ENCODE measurements at regions of chr11 and their contacts with region 1.

Region 1: GRCh38 chr11:124837491-124837856 is 27.8 kb upstream of the ROBO3 start:
- DNase-seq: peak; percentile 20
- H3K4me3 Mint-ChIP-seq: no peak overlapping the region
- H3K27ac Mint-ChIP-seq: no peak overlapping the region
- H3K4me1 Mint-ChIP-seq: peaks cover 20% of the 10 kb centered on the region
- H3K27me3 Mint-ChIP-seq: peaks cover 54% of the 10 kb centered on the region

Region 2: DNA sequence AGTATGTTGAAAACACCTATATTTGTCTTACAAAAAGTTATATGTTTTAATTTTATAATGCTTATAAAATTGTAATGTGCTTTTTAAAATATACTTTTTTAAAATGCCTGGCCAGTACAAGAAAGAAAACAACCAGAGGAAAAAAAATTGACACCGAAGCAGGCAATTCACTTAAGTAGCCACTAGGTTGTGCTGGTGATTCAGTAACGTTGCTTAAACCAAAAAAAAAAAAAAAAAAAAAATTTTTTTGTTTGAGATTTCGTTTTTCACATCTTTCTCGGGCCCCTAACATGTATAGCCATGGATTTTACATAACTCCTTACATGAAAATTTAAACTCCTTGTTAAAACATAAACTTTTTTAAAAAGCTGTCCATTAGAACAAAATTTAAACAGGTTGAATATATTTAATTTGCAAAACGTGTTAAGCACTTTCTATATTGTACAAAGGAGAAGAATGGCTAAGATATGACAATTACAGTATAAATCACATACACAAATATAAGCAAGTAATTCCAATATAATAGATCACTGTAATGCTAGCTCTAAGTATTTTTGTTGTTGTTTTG is 422.0 kb before region 1 on chr11:
- CTCF ChIA-PET with region 1: interaction called, 3 read pairs
- intact Hi-C with region 1: loop called (anchors 2 kb)
- DNase-seq: no peak
- H3K4me3 Mint-ChIP-seq: no peak overlapping the region
- H3K27ac Mint-ChIP-seq: no peak overlapping the region
- H3K4me1 Mint-ChIP-seq: no peaks in the 10 kb centered on the region
- H3K27me3 Mint-ChIP-seq: peaks cover 15% of the 10 kb centered on the region

Region 3: GRCh38 chr11:124693142-124693541 is 144.3 kb before region 1 on chr11:
- CTCF ChIA-PET with region 1: no interaction called
- intact Hi-C with region 1: no loop called
- DNase-seq: no peak
- H3K4me3 Mint-ChIP-seq: no peak overlapping the region
- H3K27ac Mint-ChIP-seq: no peak overlapping the region
- H3K4me1 Mint-ChIP-seq: no peaks in the 10 kb centered on the region
- H3K27me3 Mint-ChIP-seq: no peaks in the 10 kb centered on the region

Region 4: GRCh38 chr11:124746621-124747243 is 90.7 kb before region 1 on chr11:
- CTCF ChIA-PET with region 1: interaction called, 8 read pairs
- intact Hi-C with region 1: loop called (anchors 1 kb)
- DNase-seq: peak; percentile 76
- H3K4me3 Mint-ChIP-seq: peak overlapping the region; percentile 83
- H3K27ac Mint-ChIP-seq: peak overlapping the region; percentile 75
- H3K4me1 Mint-ChIP-seq: peaks cover 14% of the 10 kb centered on the region
- H3K27me3 Mint-ChIP-seq: no peaks in the 10 kb centered on the region

Region 5: DNA sequence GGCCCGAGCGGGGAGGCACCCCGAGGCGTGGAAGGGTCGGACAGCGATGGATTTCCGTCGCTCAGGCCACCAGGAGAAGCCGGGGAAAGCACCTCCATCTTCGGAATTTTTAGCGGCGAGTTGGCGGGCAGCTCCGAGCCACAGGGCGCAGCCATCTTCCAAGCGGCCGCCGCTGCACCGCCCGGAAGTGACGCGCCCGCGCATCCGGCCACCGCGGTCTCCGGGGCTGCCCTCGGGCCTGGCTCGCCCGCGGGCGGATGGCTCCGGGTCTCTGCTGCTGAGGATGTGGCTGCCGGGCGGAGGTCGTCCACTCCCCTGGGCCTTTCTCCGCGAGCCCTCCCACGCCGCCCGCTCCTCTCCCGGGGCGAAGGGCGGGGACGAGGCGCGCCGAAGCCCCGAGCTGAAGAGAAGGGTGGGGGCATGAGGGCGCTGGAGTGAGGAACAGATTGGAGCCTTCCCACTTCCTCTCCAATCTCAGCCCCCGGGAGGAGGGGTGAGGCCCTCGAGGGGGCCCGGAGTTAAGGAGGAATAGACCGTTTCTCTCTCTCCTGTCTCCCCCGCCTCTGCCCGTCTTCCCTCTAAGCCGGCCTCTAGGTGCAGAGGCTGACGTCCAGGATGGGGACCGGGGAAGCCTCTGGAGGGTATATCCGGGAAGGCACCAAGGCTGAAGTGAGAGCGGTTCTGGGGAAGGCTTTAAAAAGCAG is 37.1 kb before region 1 on chr11 and contains the start of gene MSANTD2:
- CTCF ChIA-PET with region 1: interaction called, 22 read pairs
- intact Hi-C with region 1: loop called (anchors 1 kb)
- DNase-seq: peak; percentile 82
- H3K4me3 Mint-ChIP-seq: peak within 1 kb of the TSS; percentile 85
- H3K27ac Mint-ChIP-seq: peak within 1 kb of the TSS; percentile 92
- H3K4me1 Mint-ChIP-seq: peaks cover 32% of the 10 kb centered on the region
- H3K27me3 Mint-ChIP-seq: no peaks in the 10 kb centered on the region
- total RNA-seq, gene MSANTD2: 3.8 to 4.2 TPM

Region 6: DNA sequence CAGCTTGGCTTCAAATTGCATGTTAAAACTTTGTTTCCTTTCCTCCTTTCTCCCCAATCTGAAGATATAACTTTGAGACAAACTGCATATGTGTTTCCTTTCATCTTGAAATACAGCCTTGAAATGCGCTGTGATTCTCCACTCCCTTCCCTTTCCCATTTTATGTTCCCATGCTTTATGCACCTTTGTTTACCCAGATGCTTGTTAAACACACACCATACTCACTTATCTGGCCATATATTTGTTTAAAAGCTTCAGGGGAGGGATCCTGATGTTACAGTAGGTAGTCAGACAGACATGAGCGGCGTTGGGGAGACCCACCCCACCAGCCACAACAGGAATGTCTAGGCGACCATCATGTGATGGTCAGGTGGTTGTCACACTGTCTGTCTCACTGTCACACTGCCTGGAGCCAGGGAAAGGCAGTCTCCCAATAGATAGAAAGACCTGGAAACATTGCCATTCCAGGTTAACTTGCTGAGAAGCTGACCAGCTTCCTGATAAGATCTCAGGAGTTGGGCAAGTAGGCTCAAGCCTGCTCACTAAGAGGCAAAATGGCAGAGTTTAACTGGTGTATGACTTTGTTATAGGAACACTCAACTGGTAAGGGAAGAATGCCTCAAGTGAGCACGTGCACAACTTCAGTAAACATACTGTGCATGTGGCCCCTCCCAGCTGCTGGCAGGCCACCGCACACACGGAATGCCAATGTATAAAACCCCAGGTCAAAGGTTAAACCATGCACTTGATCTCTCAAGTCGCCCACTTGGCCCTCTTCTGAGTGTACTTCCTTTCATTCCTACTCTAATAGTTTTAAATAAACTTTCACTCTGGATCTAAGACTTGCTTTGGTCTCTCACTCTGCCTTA is 13.7 kb before region 1 on chr11:
- CTCF ChIA-PET with region 1: no interaction called
- intact Hi-C with region 1: no loop called
- DNase-seq: no peak
- H3K4me3 Mint-ChIP-seq: no peak overlapping the region
- H3K27ac Mint-ChIP-seq: no peak overlapping the region
- H3K4me1 Mint-ChIP-seq: no peaks in the 10 kb centered on the region
- H3K27me3 Mint-ChIP-seq: peaks cover 18% of the 10 kb centered on the region

Region 7: DNA sequence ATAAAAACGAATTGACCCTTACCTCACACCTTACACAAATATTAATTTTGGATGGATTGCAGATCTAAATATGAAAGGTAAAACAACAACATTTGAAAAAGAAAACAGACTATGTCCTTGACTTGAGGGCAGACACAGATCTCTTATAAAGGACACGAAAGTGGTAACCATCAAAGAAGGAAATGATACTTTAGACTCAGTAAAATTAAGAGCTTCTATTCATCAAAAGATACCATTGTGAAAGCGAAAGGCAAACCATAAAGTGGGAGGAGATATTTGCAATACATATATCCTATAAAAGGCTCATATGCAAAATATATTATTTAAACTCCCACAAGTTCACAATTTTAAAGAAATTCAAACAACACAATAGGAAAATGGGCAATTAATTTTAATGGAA is 93.3 kb after region 1 on chr11:
- CTCF ChIA-PET with region 1: no interaction called
- intact Hi-C with region 1: no loop called
- DNase-seq: no peak
- H3K4me3 Mint-ChIP-seq: no peak overlapping the region
- H3K27ac Mint-ChIP-seq: no peak overlapping the region
- H3K4me1 Mint-ChIP-seq: peaks cover 6% of the 10 kb centered on the region
- H3K27me3 Mint-ChIP-seq: no peaks in the 10 kb centered on the region

Region 8: GRCh38 chr11:124953753-124954589 is 116.5 kb after region 1 on chr11 and contains the start of gene CCDC15:
- CTCF ChIA-PET with region 1: interaction called, 4 read pairs
- intact Hi-C with region 1: loop called (anchors 1 kb)
- DNase-seq: peak; percentile 97
- H3K4me3 Mint-ChIP-seq: no peak within 1 kb of the TSS
- H3K27ac Mint-ChIP-seq: no peak within 1 kb of the TSS
- H3K4me1 Mint-ChIP-seq: peaks cover 7% of the 10 kb centered on the region
- H3K27me3 Mint-ChIP-seq: no peaks in the 10 kb centered on the region
- total RNA-seq, gene CCDC15: 6.1 to 7.3 TPM